B cell (primary cell): ENCODE measurements at regions of chr1 and their contacts with region 1.

Region 1: DNA sequence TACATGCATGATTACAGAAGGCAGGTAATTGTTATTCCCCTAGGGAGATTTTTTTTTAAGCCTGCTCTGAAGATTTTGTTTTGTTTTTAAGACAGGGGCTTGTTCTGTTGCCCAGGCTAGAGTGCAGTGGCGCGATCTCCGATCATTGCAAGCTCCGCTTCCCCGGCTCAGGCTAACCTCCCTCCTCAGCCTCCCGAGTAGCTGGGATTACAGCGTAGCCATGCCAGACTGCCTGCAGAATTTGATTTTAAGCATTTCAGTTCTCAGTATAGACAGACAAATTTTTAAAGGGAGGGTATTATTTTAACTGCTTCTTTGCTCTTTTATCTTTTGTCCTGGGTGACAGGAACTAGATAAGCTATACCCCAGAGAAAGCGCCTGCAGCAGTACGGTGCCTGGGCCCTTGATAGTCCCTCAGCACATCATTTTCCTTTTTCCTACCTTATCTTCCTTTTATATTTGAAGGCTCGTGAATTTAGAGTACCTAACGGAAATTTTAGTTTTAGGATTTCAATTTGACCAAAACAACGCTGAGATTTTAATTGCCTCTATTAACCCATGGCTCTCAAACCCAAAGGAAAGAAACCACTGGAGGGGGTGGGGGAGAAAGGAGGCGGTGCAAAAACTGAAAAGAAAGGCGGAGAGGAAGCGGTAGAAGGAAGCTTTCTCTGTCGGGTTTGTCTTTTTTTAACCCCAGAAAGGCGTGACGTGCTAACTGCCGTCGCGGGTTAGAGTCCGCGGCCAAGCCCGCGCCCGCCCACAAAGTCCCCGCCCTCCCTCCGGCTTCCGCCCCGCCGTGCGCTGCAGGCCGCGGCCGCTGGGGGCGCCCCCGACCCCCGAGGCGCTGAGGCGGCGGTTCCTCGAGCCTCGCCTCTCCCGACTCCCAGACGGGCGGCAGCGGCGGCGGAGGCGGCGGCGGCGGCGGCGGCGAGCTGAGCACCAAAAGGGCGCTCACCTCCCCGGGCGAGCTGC is at the start of gene EEIG2:
- DNase-seq: peak; percentile 96
- ATAC-seq: peak; percentile 90
- H3K4me3 ChIP-seq: peak within 1 kb of the TSS; percentile 57 to 85 (median 74)
- H3K4me3 Mint-ChIP-seq: peak within 1 kb of the TSS; percentile 98
- H3K27ac ChIP-seq: peak within 1 kb of the TSS; percentile 75 to 82
- H3K27ac Mint-ChIP-seq: peak within 1 kb of the TSS; percentile 92
- H3K4me1 ChIP-seq: peaks cover 54 to 59% of the 10 kb centered on the region in 2 donors
- H3K4me1 Mint-ChIP-seq: peaks cover 29% of the 10 kb centered on the region
- H3K27me3 ChIP-seq: no peaks in the 10 kb centered on the region
- H3K27me3 Mint-ChIP-seq: no peaks in the 10 kb centered on the region
- CTCF ChIP-seq: peak; percentile 75
- total RNA-seq, gene EEIG2: 11.7 and 13.6 TPM in 2 replicates

Region 2: GRCh38 chr1:108107658-108108518 is 451.6 kb before region 1 on chr1:
- CTCF ChIA-PET with region 1: no interaction called
- POLR2A ChIA-PET with region 1: no interaction called
- intact Hi-C with region 1: no loop called
- DNase-seq: no peak
- ATAC-seq: no peak
- H3K4me3 ChIP-seq: no peak overlapping the region
- H3K4me3 Mint-ChIP-seq: no peak overlapping the region
- H3K27ac ChIP-seq: no peak overlapping the region
- H3K27ac Mint-ChIP-seq: no peak overlapping the region
- H3K4me1 ChIP-seq: no peaks in the 10 kb centered on the region
- H3K4me1 Mint-ChIP-seq: no peaks in the 10 kb centered on the region
- H3K27me3 ChIP-seq: no peaks in the 10 kb centered on the region
- H3K27me3 Mint-ChIP-seq: no peaks in the 10 kb centered on the region
- CTCF ChIP-seq: no peak

Region 3: GRCh38 chr1:108199781-108200570 is 359.5 kb before region 1 on chr1 and contains the start of gene SLC25A24:
- CTCF ChIA-PET with region 1: interaction called, 11 read pairs
- POLR2A ChIA-PET with region 1: no interaction called
- intact Hi-C with region 1: loop called (anchors 5 kb)
- DNase-seq: peak; percentile 85
- ATAC-seq: peak; percentile 95
- H3K4me3 ChIP-seq: peak within 1 kb of the TSS; percentile 85 to 96 (median 87)
- H3K4me3 Mint-ChIP-seq: peak within 1 kb of the TSS; percentile 93
- H3K27ac ChIP-seq: peak within 1 kb of the TSS; percentile 80 to 84
- H3K27ac Mint-ChIP-seq: peak within 1 kb of the TSS; percentile 94
- H3K4me1 ChIP-seq: peaks cover 13 to 16% of the 10 kb centered on the region in 2 donors
- H3K4me1 Mint-ChIP-seq: peaks cover 32% of the 10 kb centered on the region
- H3K27me3 ChIP-seq: no peaks in the 10 kb centered on the region
- H3K27me3 Mint-ChIP-seq: no peaks in the 10 kb centered on the region
- CTCF ChIP-seq: no peak
- total RNA-seq, gene SLC25A24: 25.3 and 25.6 TPM in 2 replicates

Region 4: DNA sequence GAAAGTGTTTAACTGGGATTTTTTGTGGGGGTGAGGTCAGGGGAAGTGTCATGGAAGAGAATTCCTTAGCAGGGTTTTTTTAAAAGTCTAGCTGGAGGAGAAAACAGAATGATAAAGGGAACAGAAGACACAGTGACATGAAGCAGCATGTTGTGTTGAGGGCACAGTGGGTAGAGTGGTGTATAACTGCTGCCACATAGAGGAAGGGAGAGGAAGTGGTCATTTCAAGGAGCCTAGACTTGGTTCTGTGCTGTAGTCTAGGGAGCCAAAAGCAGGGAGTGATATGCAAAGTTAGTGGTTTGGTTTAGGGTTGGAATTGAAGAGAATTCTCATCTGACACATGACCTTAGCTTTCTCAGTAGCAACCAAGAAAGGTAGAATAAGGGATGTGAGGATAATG is 10.6 kb after region 1 on chr1:
- CTCF ChIA-PET with region 1: interaction called, 30 read pairs
- POLR2A ChIA-PET with region 1: no interaction called
- intact Hi-C with region 1: no loop called
- DNase-seq: peak; percentile 43
- ATAC-seq: peak; percentile 97
- H3K4me3 ChIP-seq: no peak overlapping the region
- H3K4me3 Mint-ChIP-seq: no peak overlapping the region
- H3K27ac ChIP-seq: no peak overlapping the region
- H3K27ac Mint-ChIP-seq: no peak overlapping the region
- H3K4me1 ChIP-seq: peaks cover 7 to 8% of the 10 kb centered on the region in 2 donors
- H3K4me1 Mint-ChIP-seq: peaks cover 5% of the 10 kb centered on the region
- H3K27me3 ChIP-seq: no peaks in the 10 kb centered on the region
- H3K27me3 Mint-ChIP-seq: no peaks in the 10 kb centered on the region
- CTCF ChIP-seq: peak; percentile 56

Region 5: GRCh38 chr1:108628666-108629065 is 69.2 kb after region 1 on chr1:
- CTCF ChIA-PET with region 1: no interaction called
- POLR2A ChIA-PET with region 1: no interaction called
- intact Hi-C with region 1: no loop called
- DNase-seq: no peak
- ATAC-seq: no peak
- H3K4me3 ChIP-seq: no peak overlapping the region
- H3K4me3 Mint-ChIP-seq: no peak overlapping the region
- H3K27ac ChIP-seq: no peak overlapping the region
- H3K27ac Mint-ChIP-seq: no peak overlapping the region
- H3K4me1 ChIP-seq: no peaks in the 10 kb centered on the region
- H3K4me1 Mint-ChIP-seq: no peaks in the 10 kb centered on the region
- H3K27me3 ChIP-seq: no peaks in the 10 kb centered on the region
- H3K27me3 Mint-ChIP-seq: no peaks in the 10 kb centered on the region
- CTCF ChIP-seq: no peak

Region 6: GRCh38 chr1:108643492-108644335 is 84.2 kb after region 1 on chr1:
- CTCF ChIA-PET with region 1: interaction called, 47 read pairs
- POLR2A ChIA-PET with region 1: no interaction called
- intact Hi-C with region 1: loop called (anchors 1 kb)
- DNase-seq: peak; percentile 66
- ATAC-seq: peak; percentile 61
- H3K4me3 ChIP-seq: no peak overlapping the region
- H3K4me3 Mint-ChIP-seq: no peak overlapping the region
- H3K27ac ChIP-seq: no peak overlapping the region
- H3K27ac Mint-ChIP-seq: no peak overlapping the region
- H3K4me1 ChIP-seq: peaks cover 13 to 19% of the 10 kb centered on the region in 2 donors
- H3K4me1 Mint-ChIP-seq: peaks cover 21% of the 10 kb centered on the region
- H3K27me3 ChIP-seq: no peaks in the 10 kb centered on the region
- H3K27me3 Mint-ChIP-seq: no peaks in the 10 kb centered on the region
- CTCF ChIP-seq: peak; percentile 60

Region 7: GRCh38 chr1:108746372-108747205 is 187.1 kb after region 1 on chr1 and contains the start of gene STXBP3:
- CTCF ChIA-PET with region 1: no interaction called
- POLR2A ChIA-PET with region 1: no interaction called
- intact Hi-C with region 1: loop called (anchors 2 kb)
- DNase-seq: peak; percentile 99
- ATAC-seq: peak; percentile 93
- H3K4me3 ChIP-seq: peak within 1 kb of the TSS; percentile 41 to 99 (median 94)
- H3K4me3 Mint-ChIP-seq: peak within 1 kb of the TSS; percentile 98
- H3K27ac ChIP-seq: peak within 1 kb of the TSS; percentile 92 to 94
- H3K27ac Mint-ChIP-seq: peak within 1 kb of the TSS; percentile 100
- H3K4me1 ChIP-seq: peaks cover 4 to 5% of the 10 kb centered on the region in 2 donors
- H3K4me1 Mint-ChIP-seq: peaks cover 33% of the 10 kb centered on the region
- H3K27me3 ChIP-seq: no peaks in the 10 kb centered on the region
- H3K27me3 Mint-ChIP-seq: no peaks in the 10 kb centered on the region
- CTCF ChIP-seq: peak; percentile 94
- total RNA-seq, gene STXBP3: 77.5 and 78.1 TPM in 2 replicates

Region 8: GRCh38 chr1:109112652-109113285 is 553.3 kb after region 1 on chr1:
- CTCF ChIA-PET with region 1: interaction called, 3 read pairs
- POLR2A ChIA-PET with region 1: no interaction called
- intact Hi-C with region 1: loop called (anchors 5 kb)
- DNase-seq: peak; percentile 91
- ATAC-seq: peak; percentile 69
- H3K4me3 ChIP-seq: peak overlapping the region; percentile 30 to 54 (median 37)
- H3K4me3 Mint-ChIP-seq: peak overlapping the region; percentile 85
- H3K27ac ChIP-seq: peak overlapping the region in 1 of 2 donors; percentile 45
- H3K27ac Mint-ChIP-seq: peak overlapping the region; percentile 75
- H3K4me1 ChIP-seq: peaks cover 25 to 26% of the 10 kb centered on the region in 2 donors
- H3K4me1 Mint-ChIP-seq: peaks cover 27% of the 10 kb centered on the region
- H3K27me3 ChIP-seq: peaks cover 0 to 23% (median 20%) of the 10 kb centered on the region in 4 experiments
- H3K27me3 Mint-ChIP-seq: peaks cover 31% of the 10 kb centered on the region
- CTCF ChIP-seq: peak; percentile 85

Region 9: GRCh38 chr1:109947582-109948286 is 1388.2 kb after region 1 on chr1:
- CTCF ChIA-PET with region 1: no interaction called
- POLR2A ChIA-PET with region 1: no interaction called
- intact Hi-C with region 1: no loop called
- DNase-seq: no peak
- ATAC-seq: no peak
- H3K4me3 ChIP-seq: no peak overlapping the region
- H3K4me3 Mint-ChIP-seq: no peak overlapping the region
- H3K27ac ChIP-seq: no peak overlapping the region
- H3K27ac Mint-ChIP-seq: no peak overlapping the region
- H3K4me1 ChIP-seq: no peaks in the 10 kb centered on the region
- H3K4me1 Mint-ChIP-seq: no peaks in the 10 kb centered on the region
- H3K27me3 ChIP-seq: no peaks in the 10 kb centered on the region
- H3K27me3 Mint-ChIP-seq: peaks cover 29% of the 10 kb centered on the region
- CTCF ChIP-seq: no peak